Natural killer cell (primary cell): ENCODE measurements at regions of chr16 and their contacts with region 1.

Region 1: GRCh38 chr16:3879887-3880564 is 487 bp downstream of the CREBBP start:
- DNase-seq: peak; percentile 78 to 85
- ATAC-seq: peak; percentile 67 to 78 (median 70)
- H3K4me3 ChIP-seq: peak overlapping the region; percentile 57
- H3K4me3 Mint-ChIP-seq: peak overlapping the region; percentile 94
- H3K27ac ChIP-seq: no peak overlapping the region
- H3K27ac Mint-ChIP-seq: peak overlapping the region in 1 of 2 donors; percentile 83
- H3K4me1 ChIP-seq: peaks cover 43% of the 10 kb centered on the region
- H3K4me1 Mint-ChIP-seq: peaks cover 48 to 49% of the 10 kb centered on the region in 2 donors
- H3K27me3 ChIP-seq: peaks cover 3% of the 10 kb centered on the region
- H3K27me3 Mint-ChIP-seq: peaks cover 11 to 21% of the 10 kb centered on the region in 2 donors
- CTCF ChIP-seq: no peak

Region 2: DNA sequence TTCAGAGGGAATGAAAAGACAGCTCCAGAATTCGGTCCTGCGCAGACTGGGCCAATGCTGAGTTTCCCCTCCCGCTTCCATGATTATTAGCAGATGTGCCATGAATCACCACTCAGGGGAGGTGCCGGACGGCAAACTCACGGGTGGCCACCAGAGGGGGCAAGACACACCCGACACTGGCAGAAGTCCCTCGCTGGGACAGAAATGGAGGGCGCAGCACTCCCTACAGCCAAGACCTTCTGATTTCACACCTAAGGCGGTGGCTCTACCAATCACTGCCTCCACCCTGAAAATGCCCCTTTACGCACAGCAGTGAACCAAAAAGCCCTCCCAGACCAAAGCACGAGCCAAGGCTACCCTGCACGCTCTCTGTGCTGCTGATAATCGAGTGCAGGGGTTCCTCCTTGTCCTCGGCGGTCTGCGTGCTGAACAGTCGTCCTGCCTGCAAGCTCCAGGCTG is 189.5 kb before region 1 on chr16:
- intact Hi-C with region 1: loop called (anchors 2 kb)
- DNase-seq: peak; percentile 81 to 89
- ATAC-seq: peak; percentile 96 to 99 (median 97)
- H3K4me3 ChIP-seq: no peak overlapping the region
- H3K4me3 Mint-ChIP-seq: peak overlapping the region; percentile 89
- H3K27ac ChIP-seq: no peak overlapping the region
- H3K27ac Mint-ChIP-seq: peak overlapping the region; percentile 60 to 79
- H3K4me1 ChIP-seq: peaks cover 14% of the 10 kb centered on the region
- H3K4me1 Mint-ChIP-seq: peaks cover 9% of the 10 kb centered on the region in 2 donors
- H3K27me3 ChIP-seq: no peaks in the 10 kb centered on the region
- H3K27me3 Mint-ChIP-seq: no peaks in the 10 kb centered on the region
- CTCF ChIP-seq: peak; percentile 88